HepG2 (cell line): ENCODE measurements at regions of chr6 and their contacts with region 1.

Region 1: DNA sequence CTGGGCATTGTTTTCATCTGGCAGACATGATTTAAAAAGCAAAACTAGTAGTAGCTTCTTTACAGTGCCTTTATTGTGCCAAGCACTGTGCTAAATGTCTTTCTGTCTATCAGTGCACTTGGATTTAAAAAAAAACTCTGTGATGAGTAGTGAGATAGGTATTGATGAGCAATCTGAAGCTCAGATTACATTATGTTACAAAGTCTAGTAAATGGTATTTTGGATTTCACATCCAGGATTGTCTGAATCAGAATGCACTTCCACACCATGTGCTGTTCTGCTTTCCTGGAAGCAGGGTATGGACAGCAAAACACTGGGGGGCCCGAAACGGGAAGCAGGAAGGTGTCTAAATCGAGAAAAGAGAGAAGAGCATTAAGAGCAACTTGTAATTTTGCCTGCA is 103.4 kb upstream of the CCN2 start:
- DNase-seq: no peak
- ATAC-seq: no peak
- H3K4me3 ChIP-seq: no peak overlapping the region
- H3K27ac ChIP-seq: no peak overlapping the region
- H3K4me1 ChIP-seq: 0 out of 2 replicates have a peak, but pooled peaks cover 6% of the 10 kb centered on the region
- H3K27me3 ChIP-seq: no peaks in the 10 kb centered on the region; a peak in 1 of 5 replicates
- CTCF ChIP-seq: no peak
- EP300 ChIP-seq: no peak
- POLR2A ChIP-seq: no peak
- RAD21 ChIP-seq: no peak

Region 2: DNA sequence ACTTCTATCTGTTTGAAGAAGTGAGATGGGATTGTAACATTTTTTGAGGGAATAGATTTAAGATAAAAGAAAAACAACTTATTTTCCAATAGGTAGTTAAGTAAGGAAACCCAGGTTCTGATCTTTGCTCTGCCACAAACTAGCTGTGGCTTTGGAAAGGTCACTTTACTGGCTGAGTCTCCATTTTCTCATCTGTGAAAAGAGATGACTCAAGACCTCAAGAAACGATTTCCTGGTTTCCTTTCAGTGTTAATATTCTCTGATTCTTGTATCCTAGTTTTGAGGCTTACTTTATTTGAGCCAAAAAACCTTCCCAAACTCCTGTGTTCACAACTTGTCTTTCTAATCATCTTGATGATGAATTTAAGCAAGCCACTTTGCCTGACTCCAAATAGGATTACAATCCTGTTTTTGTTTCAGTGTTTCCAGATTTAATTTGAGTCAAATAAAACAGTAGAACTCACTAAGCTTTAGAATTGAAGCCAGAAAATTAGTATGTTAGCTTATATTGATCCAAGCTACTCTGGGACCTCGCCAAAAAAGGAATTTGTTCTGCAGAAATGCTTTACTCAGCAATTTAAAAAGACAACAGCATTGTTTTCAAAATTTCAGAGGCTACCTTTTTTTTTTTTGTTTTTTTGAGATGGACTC is 195.6 kb before region 1 on chr6:
- CTCF ChIA-PET with region 1: no interaction called
- POLR2A ChIA-PET with region 1: no interaction called
- in situ Hi-C with region 1: no loop called
- intact Hi-C with region 1: no loop called
- DNase-seq: no peak
- ATAC-seq: no peak
- H3K4me3 ChIP-seq: no peak overlapping the region
- H3K27ac ChIP-seq: no peak overlapping the region
- H3K4me1 ChIP-seq: peaks cover 15% of the 10 kb centered on the region
- H3K27me3 ChIP-seq: no peaks in the 10 kb centered on the region
- CTCF ChIP-seq: no peak
- EP300 ChIP-seq: no peak
- POLR2A ChIP-seq: no peak
- RAD21 ChIP-seq: no peak

Region 3: DNA sequence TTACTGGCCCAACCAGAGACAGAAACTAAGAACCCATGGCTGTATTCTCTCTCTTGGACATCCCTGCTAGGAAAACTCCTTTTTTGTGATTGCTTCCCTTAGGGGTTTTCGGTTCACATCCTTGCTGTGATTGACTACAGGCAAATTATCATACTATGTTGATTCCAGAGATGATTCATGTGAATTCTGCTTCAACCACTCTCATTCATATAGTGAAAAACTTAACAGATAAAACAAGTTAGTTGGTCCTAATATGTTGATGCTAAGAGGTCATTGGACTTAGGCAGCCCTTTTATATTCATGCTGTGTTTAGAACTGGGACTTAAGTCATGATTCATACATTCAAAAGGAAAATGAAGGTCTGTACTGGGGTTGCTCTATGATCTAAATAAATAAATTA is 26.5 kb before region 1 on chr6:
- CTCF ChIA-PET with region 1: no interaction called
- POLR2A ChIA-PET with region 1: no interaction called
- in situ Hi-C with region 1: no loop called
- intact Hi-C with region 1: loop called (anchors 1 kb)
- DNase-seq: no peak
- ATAC-seq: no peak
- H3K4me3 ChIP-seq: no peak overlapping the region
- H3K27ac ChIP-seq: no peak overlapping the region
- H3K4me1 ChIP-seq: peaks cover 17% of the 10 kb centered on the region
- H3K27me3 ChIP-seq: no peaks in the 10 kb centered on the region
- CTCF ChIP-seq: no peak
- EP300 ChIP-seq: no peak
- POLR2A ChIP-seq: no peak
- RAD21 ChIP-seq: no peak

Region 4: DNA sequence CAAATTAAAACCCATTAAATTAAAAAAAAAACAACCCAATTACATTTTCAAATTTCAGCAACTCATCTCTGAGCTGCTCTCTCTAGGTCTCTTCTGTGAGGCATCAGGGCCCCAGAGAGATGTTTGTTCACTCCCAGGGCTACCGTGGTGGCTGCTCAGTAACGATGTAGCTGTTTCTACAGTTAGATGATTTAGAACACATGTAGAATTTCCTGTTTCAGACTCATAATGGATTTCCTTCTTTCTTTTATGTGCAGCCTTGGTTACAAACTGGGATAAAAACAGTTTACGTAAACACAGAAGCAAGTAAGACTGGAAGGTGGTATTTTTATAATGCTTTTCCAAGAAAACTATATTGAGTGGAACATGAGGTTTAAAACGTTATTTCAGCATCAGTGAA is 12.8 kb after region 1 on chr6:
- CTCF ChIA-PET with region 1: no interaction called
- POLR2A ChIA-PET with region 1: no interaction called
- in situ Hi-C with region 1: no loop called
- intact Hi-C with region 1: no loop called
- DNase-seq: no peak
- ATAC-seq: no peak
- H3K4me3 ChIP-seq: no peak overlapping the region
- H3K27ac ChIP-seq: no peak overlapping the region
- H3K4me1 ChIP-seq: peaks cover 13% of the 10 kb centered on the region
- H3K27me3 ChIP-seq: no peaks in the 10 kb centered on the region
- CTCF ChIP-seq: no peak
- EP300 ChIP-seq: no peak
- POLR2A ChIP-seq: no peak
- RAD21 ChIP-seq: no peak

Region 5: GRCh38 chr6:132084833-132085509 is 30.4 kb after region 1 on chr6:
- CTCF ChIA-PET with region 1: no interaction called
- POLR2A ChIA-PET with region 1: no interaction called
- in situ Hi-C with region 1: no loop called
- intact Hi-C with region 1: loop called (anchors 5 kb)
- DNase-seq: no peak
- ATAC-seq: peak; percentile 71
- H3K4me3 ChIP-seq: peak overlapping the region; percentile 23 to 30 (median 24); a peak in 3 of 6 replicates
- H3K27ac ChIP-seq: no peak overlapping the region
- H3K4me1 ChIP-seq: peaks cover 14% of the 10 kb centered on the region; the same call in 1 of the 2 replicates
- H3K27me3 ChIP-seq: 0 out of 5 replicates have a peak, but pooled peaks cover 0 to 4% of the 10 kb centered on the region in 2 experiments
- CTCF ChIP-seq: no peak
- EP300 ChIP-seq: no peak
- POLR2A ChIP-seq: no peak
- RAD21 ChIP-seq: no peak

Region 6: GRCh38 chr6:132190097-132190814 is 135.7 kb after region 1 on chr6:
- CTCF ChIA-PET with region 1: no interaction called
- POLR2A ChIA-PET with region 1: no interaction called
- in situ Hi-C with region 1: no loop called
- intact Hi-C with region 1: no loop called
- DNase-seq: no peak
- ATAC-seq: no peak
- H3K4me3 ChIP-seq: no peak overlapping the region
- H3K27ac ChIP-seq: no peak overlapping the region
- H3K4me1 ChIP-seq: no peaks in the 10 kb centered on the region
- H3K27me3 ChIP-seq: 0 out of 5 replicates have a peak, but pooled peaks cover 0 to 7% of the 10 kb centered on the region in 2 experiments
- CTCF ChIP-seq: no peak
- EP300 ChIP-seq: no peak
- POLR2A ChIP-seq: no peak
- RAD21 ChIP-seq: no peak